AG04450 (cell line): ENCODE measurements at regions of chr3 and their contacts with region 1.

Region 1: GRCh38 chr3:9491506-9491905 is 62.1 kb downstream of the LHFPL4 start:
- DNase-seq: no peak
- H3K4me3 ChIP-seq: no peak overlapping the region
- H3K27ac ChIP-seq: no peak overlapping the region
- H3K27me3 ChIP-seq: no peaks in the 10 kb centered on the region
- CTCF ChIP-seq: no peak

Region 2: GRCh38 chr3:9503283-9503682 is 11.8 kb after region 1 on chr3:
- CTCF ChIA-PET with region 1: interaction called, 46 read pairs
- POLR2A ChIA-PET with region 1: no interaction called
- DNase-seq: peak; percentile 20
- H3K4me3 ChIP-seq: no peak overlapping the region
- H3K27ac ChIP-seq: peak overlapping the region; percentile 31
- H3K27me3 ChIP-seq: peaks cover 6% of the 10 kb centered on the region
- CTCF ChIP-seq: peak; percentile 92

Region 3: GRCh38 chr3:9569054-9569453 is 77.5 kb after region 1 on chr3:
- CTCF ChIA-PET with region 1: no interaction called
- POLR2A ChIA-PET with region 1: no interaction called
- DNase-seq: no peak
- H3K4me3 ChIP-seq: no peak overlapping the region
- H3K27ac ChIP-seq: no peak overlapping the region
- H3K27me3 ChIP-seq: no peaks in the 10 kb centered on the region
- CTCF ChIP-seq: no peak